Activated CD4-positive, alpha-beta memory T cell treated with anti-CD3 and anti-CD28 coated beads for 36 hours (primary cell): ENCODE measurements at regions of chr18 and their contacts with region 1.

Region 1: DNA sequence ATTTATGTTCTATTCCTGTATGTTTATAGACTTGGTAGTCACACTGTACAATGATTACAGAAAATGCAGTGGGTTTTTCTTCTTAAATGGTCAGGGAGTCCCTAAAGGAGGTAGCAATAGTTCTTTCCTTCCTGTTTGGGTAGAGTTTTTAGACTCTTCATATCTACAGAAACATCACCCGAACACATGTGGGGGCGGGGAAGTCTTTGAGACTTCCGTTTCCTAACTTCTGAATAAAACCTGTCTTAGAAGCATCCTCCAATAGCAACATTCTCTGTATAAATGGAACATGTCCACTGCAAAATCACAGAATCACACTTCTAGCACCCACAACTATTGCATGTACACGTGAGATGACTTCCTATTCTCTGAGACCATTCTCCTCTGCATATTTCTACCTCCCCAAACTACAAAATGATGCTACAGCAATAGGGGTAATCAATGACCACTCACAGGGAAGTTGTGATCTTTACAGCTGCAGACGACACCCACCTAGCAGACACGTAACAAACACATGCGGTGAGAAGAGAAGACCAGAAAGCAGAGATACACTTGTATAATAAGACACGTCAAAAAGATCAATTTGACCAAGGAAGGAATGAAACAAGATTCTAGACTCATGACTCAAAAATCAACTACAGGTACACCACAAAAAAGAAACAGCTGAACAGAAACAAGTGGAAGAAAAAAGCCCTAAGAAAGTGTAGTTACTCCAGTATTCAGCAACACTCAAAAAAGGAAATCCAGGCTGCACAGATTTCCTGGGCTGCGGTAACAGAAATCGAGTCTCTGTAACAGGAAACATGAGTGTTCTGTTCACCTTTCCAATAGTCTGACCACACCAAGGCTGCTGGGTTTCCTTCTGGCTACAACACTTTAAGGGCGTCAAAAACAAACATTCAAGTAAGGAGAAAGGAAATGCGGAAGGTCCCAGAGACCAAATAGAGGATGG is 120.4 kb downstream of the ZNF516 start:
- DNase-seq: peak; percentile 75
- H3K4me3 Mint-ChIP-seq: no peak overlapping the region
- H3K27ac Mint-ChIP-seq: peak overlapping the region; percentile 64
- H3K4me1 Mint-ChIP-seq: peaks cover 50% of the 10 kb centered on the region
- H3K27me3 Mint-ChIP-seq: peaks cover 1% of the 10 kb centered on the region

Region 2: DNA sequence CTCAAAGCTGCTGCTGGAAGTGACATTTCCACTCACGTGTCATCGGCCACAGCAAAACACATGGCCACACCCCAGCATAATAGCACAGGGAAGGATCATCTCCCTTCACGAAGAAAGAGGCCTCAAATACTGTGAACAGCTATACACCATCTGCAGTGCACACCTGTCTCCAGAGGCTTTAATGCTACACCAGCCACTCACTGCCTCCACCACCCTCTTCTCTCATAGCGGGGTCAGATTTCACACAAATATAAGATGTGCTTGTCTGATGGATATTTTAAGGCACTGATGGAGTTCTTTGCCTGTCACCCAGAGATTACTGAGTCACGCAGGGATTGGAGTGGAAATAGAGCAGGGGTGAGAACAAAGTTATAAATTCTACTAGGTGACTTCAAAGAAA is 253.6 kb before region 1 on chr18:
- CTCF ChIA-PET with region 1: no interaction called
- POLR2A ChIA-PET with region 1: no interaction called
- intact Hi-C with region 1: no loop called
- DNase-seq: no peak
- H3K4me3 Mint-ChIP-seq: no peak overlapping the region
- H3K27ac Mint-ChIP-seq: no peak overlapping the region
- H3K4me1 Mint-ChIP-seq: no peaks in the 10 kb centered on the region
- H3K27me3 Mint-ChIP-seq: no peaks in the 10 kb centered on the region

Region 3: GRCh38 chr18:76364282-76365259 is 10.0 kb before region 1 on chr18:
- CTCF ChIA-PET with region 1: interaction called, 5 read pairs
- POLR2A ChIA-PET with region 1: interaction called, 3 read pairs
- intact Hi-C with region 1: loop called (anchors 1 kb)
- DNase-seq: peak; percentile 54
- H3K4me3 Mint-ChIP-seq: no peak overlapping the region
- H3K27ac Mint-ChIP-seq: no peak overlapping the region
- H3K4me1 Mint-ChIP-seq: peaks cover 18% of the 10 kb centered on the region
- H3K27me3 Mint-ChIP-seq: peaks cover 11% of the 10 kb centered on the region

Region 4: GRCh38 chr18:76410660-76411417 is 36.2 kb after region 1 on chr18:
- CTCF ChIA-PET with region 1: no interaction called
- POLR2A ChIA-PET with region 1: no interaction called
- intact Hi-C with region 1: loop called (anchors 5 kb)
- DNase-seq: peak; percentile 49
- H3K4me3 Mint-ChIP-seq: no peak overlapping the region
- H3K27ac Mint-ChIP-seq: no peak overlapping the region
- H3K4me1 Mint-ChIP-seq: peaks cover 13% of the 10 kb centered on the region
- H3K27me3 Mint-ChIP-seq: peaks cover 10% of the 10 kb centered on the region